ENCODE measurements at regions of chr16 and their contacts with region 1.

Region 1: DNA sequence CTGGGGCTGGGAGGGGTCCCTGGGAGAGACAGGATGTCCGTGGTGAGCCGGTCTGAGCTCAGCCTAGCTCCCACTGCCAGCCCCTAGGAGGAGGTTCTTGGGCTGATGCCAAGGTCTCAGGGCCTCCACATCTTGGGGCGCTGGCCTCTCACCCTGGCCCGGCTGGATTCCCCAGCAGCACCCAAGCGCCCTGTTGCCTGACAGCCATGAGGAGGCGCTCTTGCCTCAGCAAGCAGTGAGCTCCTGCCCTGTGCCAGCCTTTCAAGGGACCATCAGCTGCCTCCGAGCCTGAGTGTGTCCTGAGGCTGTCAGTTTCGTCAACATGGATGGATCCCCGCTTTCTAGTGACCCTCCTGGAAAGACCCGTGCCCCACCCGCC is 234.9 kb upstream of the CIBAR2 start:
- DNase-seq: peak in 1 of 2 experiments; percentile 74
- H3K4me3 ChIP-seq: no peak overlapping the region
- H3K27ac ChIP-seq: no peak overlapping the region
- H3K4me1 ChIP-seq: peaks cover 0 to 13% (median under 1%) of the 10 kb centered on the region in 4 experiments; a peak in 4 of 7 replicates
- H3K27me3 ChIP-seq: no peaks in the 10 kb centered on the region
- CTCF ChIP-seq: peak; percentile 89 to 95 (median 93)
- EP300 ChIP-seq: no peak
- POLR2A ChIP-seq: no peak
- RAD21 ChIP-seq: peak; percentile 91 to 95

Region 2: DNA sequence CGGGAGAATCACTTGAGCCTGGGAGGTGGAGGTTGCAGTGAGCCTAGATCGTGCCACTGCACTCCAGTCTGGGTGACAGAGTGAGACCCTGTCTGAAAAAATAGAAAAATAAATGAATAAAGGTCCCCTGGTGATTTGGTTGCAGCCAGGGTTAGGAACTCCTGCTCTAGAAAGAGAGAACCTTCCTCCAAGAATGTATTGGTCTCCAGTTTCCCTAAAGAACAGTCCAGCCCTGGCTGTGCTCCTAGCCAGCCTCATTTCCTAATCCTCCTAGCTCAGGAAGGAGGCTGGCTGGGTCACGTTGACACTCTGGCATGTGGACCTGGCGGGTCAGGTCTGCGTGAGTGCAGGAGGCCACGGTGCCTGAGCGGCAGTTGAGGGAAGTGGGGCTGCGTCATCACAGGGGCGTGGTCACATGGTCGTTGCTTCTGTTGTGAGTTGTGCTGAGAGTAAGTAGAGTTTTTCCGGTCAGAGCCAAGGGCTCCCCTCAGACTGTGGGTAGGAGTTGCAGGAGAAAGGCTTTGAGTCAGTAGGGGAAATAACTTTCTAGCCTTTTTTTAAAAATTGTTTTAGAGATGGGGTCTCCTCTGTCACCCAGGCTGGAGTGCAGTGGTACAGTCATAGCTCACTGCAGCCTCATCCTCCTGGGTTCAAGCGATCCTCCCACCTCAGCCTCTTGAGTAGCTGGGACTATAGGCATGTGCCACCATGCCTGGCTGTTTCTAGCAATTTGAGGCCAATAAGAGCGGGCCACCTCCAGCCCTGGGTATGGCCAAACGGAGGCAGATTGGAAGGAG is 41.0 kb before region 1 on chr16:
- CTCF ChIA-PET with region 1: interaction called, 16 read pairs
- POLR2A ChIA-PET with region 1: no interaction called
- DNase-seq: no peak
- H3K4me3 ChIP-seq: no peak overlapping the region
- H3K27ac ChIP-seq: no peak overlapping the region
- H3K4me1 ChIP-seq: peaks cover 3 to 27% (median 23%) of the 10 kb centered on the region in 4 experiments
- H3K27me3 ChIP-seq: 0 out of 7 replicates have a peak, but pooled peaks cover 0 to 4% (median 0%) of the 10 kb centered on the region in 4 experiments
- CTCF ChIP-seq: no peak
- EP300 ChIP-seq: no peak
- POLR2A ChIP-seq: no peak
- RAD21 ChIP-seq: no peak

Region 3: GRCh38 chr16:85330694-85331188 is 16.5 kb before region 1 on chr16:
- CTCF ChIA-PET with region 1: interaction called, 15 read pairs
- POLR2A ChIA-PET with region 1: interaction called, 4 read pairs
- DNase-seq: no peak
- H3K4me3 ChIP-seq: peak overlapping the region in 2 of 4 experiments; percentile 32 to 36; a peak in 3 of 8 replicates
- H3K27ac ChIP-seq: no peak overlapping the region
- H3K4me1 ChIP-seq: peaks cover 4 to 51% (median 42%) of the 10 kb centered on the region in 4 experiments
- H3K27me3 ChIP-seq: peaks cover 26 to 56% (median 47%) of the 10 kb centered on the region in 4 experiments
- CTCF ChIP-seq: peak in 2 of 3 experiments; percentile 59 to 74; a peak in 3 of 4 replicates
- EP300 ChIP-seq: no peak
- POLR2A ChIP-seq: no peak
- RAD21 ChIP-seq: peak; percentile 24 to 40

Region 4: DNA sequence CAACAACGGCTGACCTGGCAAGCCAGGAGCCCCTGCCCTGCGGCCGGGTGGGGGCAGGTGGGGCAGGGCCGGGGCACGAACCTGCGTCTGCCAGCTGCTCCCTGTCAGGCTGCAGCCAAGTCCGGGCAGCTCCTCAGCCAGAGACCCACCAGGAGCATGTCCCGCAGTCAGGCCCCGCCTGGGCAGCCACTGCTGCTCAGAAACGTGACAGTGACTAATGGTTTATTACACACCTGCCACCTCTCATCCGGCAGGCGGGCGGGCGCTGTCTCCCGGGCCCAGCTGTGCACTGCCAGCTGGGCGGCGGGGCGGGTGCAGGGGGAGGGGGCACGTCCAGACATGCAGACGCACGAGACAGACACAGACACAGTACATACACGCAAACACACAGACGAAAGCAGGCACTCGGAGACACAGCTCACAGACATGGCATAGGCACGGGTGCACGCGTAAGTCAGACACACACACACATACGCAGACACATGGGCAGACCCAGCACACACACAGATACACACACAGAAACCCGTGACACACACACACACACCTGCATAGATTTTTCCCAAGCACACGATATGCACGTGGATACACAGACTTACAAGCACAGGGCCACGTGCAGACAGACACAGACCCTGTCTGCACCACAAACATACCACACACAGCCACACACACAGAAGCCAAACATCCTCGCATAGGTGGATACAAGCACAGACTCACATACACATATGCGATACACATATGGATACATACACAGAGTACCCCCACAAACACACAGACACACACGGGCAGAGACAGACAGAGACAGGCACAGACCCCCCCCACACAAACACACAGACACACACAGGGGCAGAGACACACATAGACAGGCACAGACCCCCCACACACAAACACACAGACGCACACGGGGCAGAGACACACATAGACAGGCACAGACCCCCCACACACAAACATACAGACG is 13.4 kb after region 1 on chr16:
- CTCF ChIA-PET with region 1: interaction called, 177 read pairs
- POLR2A ChIA-PET with region 1: interaction called, 3 read pairs
- DNase-seq: no peak
- H3K4me3 ChIP-seq: no peak overlapping the region
- H3K27ac ChIP-seq: no peak overlapping the region; the same call in 1 of the 2 replicates
- H3K4me1 ChIP-seq: peaks cover 5 to 9% (median 7%) of the 10 kb centered on the region in 4 experiments
- H3K27me3 ChIP-seq: peaks cover 0 to 6% (median 2%) of the 10 kb centered on the region in 4 experiments; a peak in 3 of 7 replicates
- CTCF ChIP-seq: no peak
- EP300 ChIP-seq: no peak
- POLR2A ChIP-seq: no peak
- RAD21 ChIP-seq: no peak

Region 5: GRCh38 chr16:85393674-85394483 is 46.7 kb after region 1 on chr16:
- CTCF ChIA-PET with region 1: interaction called, 24 read pairs
- POLR2A ChIA-PET with region 1: no interaction called
- DNase-seq: peak in 1 of 2 experiments; percentile 97
- H3K4me3 ChIP-seq: peak overlapping the region in 1 of 4 experiments; percentile 43; a peak in 1 of 8 replicates
- H3K27ac ChIP-seq: no peak overlapping the region
- H3K4me1 ChIP-seq: peaks cover 0 to 31% (median 25%) of the 10 kb centered on the region in 4 experiments; a peak in 6 of 7 replicates
- H3K27me3 ChIP-seq: no peaks in the 10 kb centered on the region
- CTCF ChIP-seq: peak; percentile 85 to 98 (median 94)
- EP300 ChIP-seq: no peak
- POLR2A ChIP-seq: no peak
- RAD21 ChIP-seq: peak; percentile 72 to 81

Measured in H1 (cell line).